AG04450 (cell line): ENCODE measurements at regions of chr13 and their contacts with region 1.

Region 1: GRCh38 chr13:99258210-99258860 is at the start of gene GPR18:
- DNase-seq: no peak
- H3K4me3 ChIP-seq: no peak within 1 kb of the TSS
- H3K27ac ChIP-seq: no peak within 1 kb of the TSS
- H3K27me3 ChIP-seq: no peaks in the 10 kb centered on the region
- CTCF ChIP-seq: no peak
- polyA plus RNA-seq, gene GPR18: not detected in 2 replicates

Region 2: GRCh38 chr13:99151516-99151915 is 106.8 kb before region 1 on chr13:
- CTCF ChIA-PET with region 1: no interaction called
- POLR2A ChIA-PET with region 1: no interaction called
- DNase-seq: no peak
- H3K4me3 ChIP-seq: no peak overlapping the region
- H3K27ac ChIP-seq: no peak overlapping the region
- H3K27me3 ChIP-seq: no peaks in the 10 kb centered on the region
- CTCF ChIP-seq: no peak

Region 3: DNA sequence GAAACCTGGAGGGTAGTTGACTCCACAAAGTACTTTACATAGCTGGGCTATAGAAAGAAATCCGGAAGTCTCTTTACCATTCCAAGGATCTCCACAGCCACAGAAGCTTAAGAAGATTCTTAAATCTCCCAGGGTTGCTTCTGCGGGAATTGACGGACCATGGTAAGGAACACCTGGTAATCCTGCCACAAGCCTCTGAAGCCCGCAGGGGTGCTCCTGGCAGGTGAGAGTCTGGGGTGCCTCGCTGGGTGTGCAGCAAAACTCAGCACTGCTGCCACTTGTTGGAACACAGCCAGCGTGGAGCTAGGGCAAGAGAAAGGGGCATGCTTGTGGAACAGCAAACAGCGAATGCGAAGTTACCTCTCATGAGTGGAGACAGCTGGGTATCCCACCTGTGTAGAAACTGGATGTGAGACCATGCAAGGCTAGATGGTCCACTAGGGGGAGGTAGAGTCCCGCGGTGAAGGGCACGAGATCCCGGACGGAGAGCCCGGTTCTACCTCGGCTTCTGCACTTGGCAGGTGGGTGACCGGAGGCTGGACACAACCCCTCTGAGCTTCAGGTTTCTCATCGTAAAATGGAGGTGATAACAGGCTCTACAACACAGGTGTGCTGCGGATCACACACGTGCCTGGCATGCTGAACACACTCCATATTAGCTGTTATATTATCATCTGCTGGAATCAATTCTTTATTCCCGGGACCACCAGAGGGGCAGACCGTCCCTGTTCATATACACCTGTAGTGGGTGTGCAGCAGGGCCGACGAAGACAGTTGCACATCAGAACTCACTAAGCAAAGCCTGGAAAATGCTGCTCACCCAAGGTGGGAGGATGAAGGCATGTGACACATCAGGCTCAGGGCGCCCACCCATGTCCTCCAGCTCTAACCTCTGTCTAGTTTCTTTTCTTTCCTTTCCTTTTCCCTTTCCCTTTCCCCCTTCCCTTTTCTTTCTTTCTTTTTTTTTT is 81.7 kb before region 1 on chr13:
- CTCF ChIA-PET with region 1: interaction called, 241 read pairs
- POLR2A ChIA-PET with region 1: no interaction called
- DNase-seq: no peak
- H3K4me3 ChIP-seq: no peak overlapping the region
- H3K27ac ChIP-seq: no peak overlapping the region
- H3K27me3 ChIP-seq: peaks cover 15% of the 10 kb centered on the region
- CTCF ChIP-seq: peak; percentile 99